ENCODE measurements at regions of chr12 and their contacts with region 1.

Region 1: DNA sequence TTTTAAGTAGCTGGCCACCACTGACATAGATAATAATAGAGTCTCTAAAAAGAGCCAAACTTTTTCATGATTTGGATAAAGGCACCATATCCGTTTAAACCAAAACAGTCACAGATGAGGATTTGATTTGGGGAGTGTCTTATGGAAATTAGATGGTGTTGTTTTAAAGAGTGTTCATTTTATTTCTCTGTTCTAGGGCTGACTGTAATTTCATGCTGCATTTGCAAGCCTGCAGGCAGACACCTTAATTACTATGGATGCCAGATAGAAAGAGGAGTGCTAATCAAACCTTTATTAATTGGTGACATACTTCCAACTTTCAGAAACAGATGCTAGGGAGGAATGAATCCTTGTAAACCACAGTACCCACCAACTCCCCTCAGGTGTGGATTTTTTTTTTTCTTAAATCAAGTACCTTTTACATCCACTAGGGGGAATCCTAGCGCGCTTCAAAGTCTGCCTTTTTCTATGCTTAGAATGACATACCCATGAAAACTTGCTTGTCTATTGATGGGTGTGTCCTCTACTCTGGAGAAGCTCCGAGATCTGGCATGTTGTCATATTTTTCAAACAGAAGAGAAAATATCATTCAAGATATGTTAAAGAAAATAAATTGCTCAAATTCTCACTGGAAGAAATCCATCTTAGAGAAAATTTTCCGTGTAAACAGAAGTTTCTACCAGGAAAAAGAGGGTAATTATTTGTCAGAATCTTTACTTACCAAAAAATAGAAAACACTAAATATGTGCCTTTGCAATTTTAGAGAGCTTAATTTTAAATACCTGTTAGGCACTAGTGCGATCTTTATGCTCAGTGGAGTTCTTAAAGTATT is 14.2 kb upstream of the PLXNC1 start:
- DNase-seq: peak; percentile 64
- H3K4me3 ChIP-seq: peak overlapping the region in 1 of 2 experiments; percentile 4; a peak in 1 of 4 replicates
- H3K27ac ChIP-seq: no peak overlapping the region
- H3K4me1 ChIP-seq: no peaks in the 10 kb centered on the region
- H3K27me3 ChIP-seq: no peaks in the 10 kb centered on the region
- CTCF ChIP-seq: peak; percentile 79
- EP300 ChIP-seq: no peak
- RAD21 ChIP-seq: peak; percentile 85

Region 2: GRCh38 chr12:94074980-94075928 is 58.9 kb before region 1 on chr12:
- CTCF ChIA-PET with region 1: no interaction called
- POLR2A ChIA-PET with region 1: no interaction called
- DNase-seq: peak; percentile 48
- H3K4me3 ChIP-seq: no peak overlapping the region
- H3K27ac ChIP-seq: peak overlapping the region in 1 of 2 experiments; percentile 11; a peak in 1 of 4 replicates
- H3K4me1 ChIP-seq: peaks cover 0 to 7% of the 10 kb centered on the region in 2 experiments; a peak in 2 of 4 replicates
- H3K27me3 ChIP-seq: no peaks in the 10 kb centered on the region
- CTCF ChIP-seq: peak; percentile 66
- EP300 ChIP-seq: no peak
- RAD21 ChIP-seq: peak; percentile 73

Region 3: GRCh38 chr12:94095618-94096017 is 38.6 kb before region 1 on chr12:
- CTCF ChIA-PET with region 1: no interaction called
- POLR2A ChIA-PET with region 1: no interaction called
- DNase-seq: no peak
- H3K4me3 ChIP-seq: no peak overlapping the region
- H3K27ac ChIP-seq: no peak overlapping the region
- H3K4me1 ChIP-seq: peaks cover 0 to 18% of the 10 kb centered on the region in 2 experiments; a peak in 2 of 4 replicates
- H3K27me3 ChIP-seq: no peaks in the 10 kb centered on the region
- CTCF ChIP-seq: no peak
- EP300 ChIP-seq: no peak
- RAD21 ChIP-seq: no peak

Region 4: GRCh38 chr12:94112132-94112531 is 22.0 kb before region 1 on chr12:
- CTCF ChIA-PET with region 1: interaction called, 15 read pairs
- POLR2A ChIA-PET with region 1: no interaction called
- DNase-seq: no peak
- H3K4me3 ChIP-seq: no peak overlapping the region
- H3K27ac ChIP-seq: no peak overlapping the region
- H3K4me1 ChIP-seq: peaks cover 3 to 8% of the 10 kb centered on the region in 2 experiments
- H3K27me3 ChIP-seq: no peaks in the 10 kb centered on the region
- CTCF ChIP-seq: no peak
- EP300 ChIP-seq: no peak
- RAD21 ChIP-seq: no peak

Region 5: GRCh38 chr12:94149119-94149780 is 15.1 kb after region 1 on chr12:
- CTCF ChIA-PET with region 1: interaction called, 13 read pairs
- POLR2A ChIA-PET with region 1: no interaction called
- DNase-seq: no peak
- H3K4me3 ChIP-seq: peak overlapping the region; percentile 39 to 53; a peak in 3 of 4 replicates
- H3K27ac ChIP-seq: no peak overlapping the region
- H3K4me1 ChIP-seq: peaks cover 0 to 18% of the 10 kb centered on the region in 2 experiments; a peak in 2 of 4 replicates
- H3K27me3 ChIP-seq: peaks cover 59% of the 10 kb centered on the region
- CTCF ChIP-seq: peak; percentile 26
- EP300 ChIP-seq: no peak
- RAD21 ChIP-seq: no peak

Region 6: GRCh38 chr12:94435511-94435927 is 301.3 kb after region 1 on chr12:
- CTCF ChIA-PET with region 1: interaction called, 22 read pairs
- POLR2A ChIA-PET with region 1: no interaction called
- DNase-seq: no peak
- H3K4me3 ChIP-seq: no peak overlapping the region
- H3K27ac ChIP-seq: no peak overlapping the region
- H3K4me1 ChIP-seq: peaks cover 0 to 3% of the 10 kb centered on the region in 2 experiments; a peak in 1 of 4 replicates
- H3K27me3 ChIP-seq: no peaks in the 10 kb centered on the region
- CTCF ChIP-seq: no peak
- EP300 ChIP-seq: no peak
- RAD21 ChIP-seq: no peak

Region 7: GRCh38 chr12:94532490-94533422 is 398.6 kb after region 1 on chr12:
- CTCF ChIA-PET with region 1: interaction called, 18 read pairs
- POLR2A ChIA-PET with region 1: no interaction called
- DNase-seq: peak; percentile 79
- H3K4me3 ChIP-seq: no peak overlapping the region
- H3K27ac ChIP-seq: no peak overlapping the region
- H3K4me1 ChIP-seq: peaks cover 0 to 2% of the 10 kb centered on the region in 2 experiments; a peak in 1 of 4 replicates
- H3K27me3 ChIP-seq: no peaks in the 10 kb centered on the region; the same call in 1 of the 2 replicates
- CTCF ChIP-seq: peak; percentile 83
- EP300 ChIP-seq: no peak
- RAD21 ChIP-seq: peak; percentile 95

Measured in SK-N-SH (cell line).